ENCODE measurements at regions of chrX and their contacts with region 1.

Region 1: GRCh38 chrX:19544693-19545305 is 29.5 kb upstream of the MAP3K15 start:
- DNase-seq: peak; percentile 43
- H3K4me3 ChIP-seq: no peak overlapping the region
- H3K27ac ChIP-seq: no peak overlapping the region
- H3K4me1 ChIP-seq: no peaks in the 10 kb centered on the region
- H3K27me3 ChIP-seq: no peaks in the 10 kb centered on the region
- CTCF ChIP-seq: peak; percentile 47 to 58
- POLR2A ChIP-seq: no peak

Region 2: DNA sequence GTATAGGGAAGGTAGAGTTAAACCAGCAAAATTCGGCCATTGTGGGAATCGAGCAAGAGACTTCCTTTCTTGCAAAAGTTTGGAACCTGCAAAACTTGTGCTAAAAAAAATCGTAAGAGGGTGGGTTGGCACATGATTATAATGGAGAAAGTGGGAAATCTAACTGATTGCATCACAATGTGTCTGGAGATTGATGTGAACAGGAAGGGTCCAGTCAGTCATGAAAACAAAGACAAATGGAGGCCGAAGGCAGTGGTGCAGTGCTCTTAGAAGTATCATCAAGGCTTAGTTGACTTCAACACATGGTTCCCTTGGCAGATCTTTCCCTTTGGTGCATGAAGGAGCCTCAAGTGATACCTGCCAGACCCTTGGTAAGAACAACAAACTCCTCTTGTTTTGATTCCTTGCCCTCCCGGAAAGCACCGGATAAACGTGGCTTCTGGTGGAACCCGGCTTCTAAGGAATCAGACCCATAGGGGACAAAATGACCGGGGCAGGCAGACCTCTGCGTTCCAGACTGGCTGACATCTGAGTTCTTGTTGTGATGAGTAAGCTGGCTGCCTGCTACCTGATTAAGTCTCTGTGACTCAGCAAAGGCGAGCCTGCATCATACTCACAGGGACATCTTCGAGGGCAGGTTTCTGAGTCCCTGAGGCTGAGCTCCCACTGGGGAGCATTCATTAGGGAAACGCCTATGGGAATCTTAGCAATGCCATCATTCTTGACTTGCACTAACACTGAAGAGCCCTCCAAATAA is 58.2 kb after region 1 on chrX:
- CTCF ChIA-PET with region 1: no interaction called
- POLR2A ChIA-PET with region 1: no interaction called
- dilution Hi-C with region 1: no loop called
- intact Hi-C with region 1: no loop called
- DNase-seq: no peak
- H3K4me3 ChIP-seq: no peak overlapping the region
- H3K27ac ChIP-seq: peak overlapping the region; percentile 42
- H3K4me1 ChIP-seq: peaks cover 2% of the 10 kb centered on the region
- H3K27me3 ChIP-seq: no peaks in the 10 kb centered on the region
- CTCF ChIP-seq: no peak
- POLR2A ChIP-seq: no peak

Region 3: GRCh38 chrX:19739683-19740082 is 194.9 kb after region 1 on chrX:
- CTCF ChIA-PET with region 1: no interaction called
- POLR2A ChIA-PET with region 1: no interaction called
- dilution Hi-C with region 1: no loop called
- intact Hi-C with region 1: loop called (anchors 2 kb)
- DNase-seq: peak; percentile 64
- H3K4me3 ChIP-seq: no peak overlapping the region
- H3K27ac ChIP-seq: no peak overlapping the region
- H3K4me1 ChIP-seq: peaks cover 9% of the 10 kb centered on the region
- H3K27me3 ChIP-seq: no peaks in the 10 kb centered on the region
- CTCF ChIP-seq: peak; percentile 57 to 64
- POLR2A ChIP-seq: no peak

Region 4: GRCh38 chrX:20066968-20067708 is 522.3 kb after region 1 on chrX:
- CTCF ChIA-PET with region 1: no interaction called
- POLR2A ChIA-PET with region 1: no interaction called
- dilution Hi-C with region 1: no loop called
- intact Hi-C with region 1: loop called (anchors 10 kb)
- DNase-seq: peak; percentile 11
- H3K4me3 ChIP-seq: no peak overlapping the region
- H3K27ac ChIP-seq: no peak overlapping the region
- H3K4me1 ChIP-seq: peaks cover 4% of the 10 kb centered on the region
- H3K27me3 ChIP-seq: no peaks in the 10 kb centered on the region
- CTCF ChIP-seq: peak in 1 of 2 donors; percentile 15
- POLR2A ChIP-seq: no peak

Measured in endothelial cell of umbilical vein (primary cell).